Activated T-helper 1 cell treated with anti-CD3 and anti-CD28 coated beads, Interleukin-12 subunit alpha, Interleukin-12 subunit beta, Interleukin-2, Interleukin-4 antibody, amounts not matched to agents 30 ng/mL and 10 ng/mL and 1 ng/mL, durations not matched to agents 14 hours and 24 hours and 36 hours (primary cell): ENCODE measurements at regions of chr2 and their contacts with region 1.

Region 1: DNA sequence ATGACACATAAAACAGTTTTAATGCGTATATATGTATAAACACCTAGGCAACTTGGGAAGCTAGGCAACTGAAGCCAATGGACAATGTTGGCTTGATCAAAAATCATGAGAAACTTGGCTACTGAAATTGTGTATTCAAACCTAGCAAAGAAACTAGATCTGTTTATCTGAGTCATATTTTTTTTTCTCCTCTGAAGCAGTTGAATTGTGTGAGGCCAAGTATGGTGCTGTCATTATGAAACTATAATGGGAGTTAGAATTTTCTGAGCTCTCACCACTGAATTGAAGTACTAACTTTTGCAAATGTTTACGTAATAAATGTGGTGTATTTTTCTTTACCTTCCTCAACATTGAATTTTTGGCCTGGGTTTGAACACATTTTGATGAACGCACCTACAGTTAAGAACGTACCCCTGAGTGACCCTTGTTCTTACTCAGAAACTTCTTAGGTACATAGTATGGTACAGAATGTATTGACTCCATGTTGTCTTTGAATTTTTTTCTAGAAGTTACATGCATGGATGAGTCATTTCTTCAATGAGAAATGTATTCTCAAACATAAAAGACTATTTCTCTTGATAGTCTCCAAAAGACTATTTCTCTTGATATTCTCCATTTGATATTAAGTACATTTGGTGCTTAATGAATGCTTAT is 23.8 kb downstream of the CD28 start:
- DNase-seq: no peak
- H3K4me3 Mint-ChIP-seq: peak overlapping the region; percentile 32
- H3K27ac Mint-ChIP-seq: peak overlapping the region; percentile 97
- H3K4me1 Mint-ChIP-seq: peaks cover 92% of the 10 kb centered on the region
- H3K27me3 Mint-ChIP-seq: no peaks in the 10 kb centered on the region

Region 2: DNA sequence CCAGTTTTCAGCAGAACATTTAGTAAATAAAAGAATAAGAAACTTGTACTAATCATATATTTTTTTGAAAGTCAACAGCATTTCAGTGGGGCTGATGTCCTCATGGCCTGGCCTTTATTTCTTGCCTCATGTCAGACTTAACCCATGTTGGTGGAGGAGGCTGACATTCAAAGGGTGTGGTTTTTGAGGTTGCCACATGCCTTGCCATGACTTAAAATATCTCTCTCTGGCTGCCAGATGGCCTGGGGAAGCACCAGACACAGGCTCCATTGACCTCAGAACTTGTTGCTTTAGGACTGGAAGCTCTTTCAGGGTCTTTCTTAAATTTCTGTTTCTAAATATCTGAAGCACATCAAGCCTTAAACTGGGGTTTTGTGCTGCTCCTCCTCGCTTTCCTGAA is 56.3 kb before region 1 on chr2:
- intact Hi-C with region 1: loop called (anchors 2 kb)
- DNase-seq: peak; percentile 49
- H3K4me3 Mint-ChIP-seq: peak overlapping the region; percentile 61
- H3K27ac Mint-ChIP-seq: peak overlapping the region; percentile 90
- H3K4me1 Mint-ChIP-seq: peaks cover 33% of the 10 kb centered on the region
- H3K27me3 Mint-ChIP-seq: no peaks in the 10 kb centered on the region

Region 3: GRCh38 chr2:203692031-203692710 is 38.0 kb before region 1 on chr2:
- intact Hi-C with region 1: no loop called
- DNase-seq: no peak
- H3K4me3 Mint-ChIP-seq: no peak overlapping the region
- H3K27ac Mint-ChIP-seq: no peak overlapping the region
- H3K4me1 Mint-ChIP-seq: peaks cover 14% of the 10 kb centered on the region
- H3K27me3 Mint-ChIP-seq: peaks cover 8% of the 10 kb centered on the region

Region 4: DNA sequence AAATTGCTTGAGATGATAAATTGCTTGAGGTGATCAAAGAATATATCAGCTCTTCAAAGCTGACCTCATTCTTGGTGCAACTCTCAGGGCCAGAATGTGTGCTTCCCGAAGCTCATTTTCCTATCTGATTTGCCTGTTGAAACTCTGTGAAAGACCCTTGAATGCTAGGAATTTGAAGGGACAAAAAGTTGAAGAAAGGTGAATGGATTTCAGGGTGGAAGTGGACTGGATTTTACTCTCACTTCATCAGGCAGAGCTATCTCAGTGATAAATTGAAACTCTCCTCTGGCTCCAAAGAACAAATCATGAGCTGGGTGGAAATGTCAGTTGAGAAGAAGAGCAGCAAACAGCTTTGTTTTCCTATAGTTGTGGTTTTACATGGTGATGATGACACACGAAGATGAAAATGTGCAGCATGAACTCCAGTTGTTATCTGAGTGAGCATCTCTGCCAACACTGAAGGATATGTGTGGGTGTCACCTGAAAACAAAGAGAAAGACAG is 10.6 kb after region 1 on chr2:
- intact Hi-C with region 1: loop called (anchors 1 kb)
- DNase-seq: peak; percentile 66
- H3K4me3 Mint-ChIP-seq: peak overlapping the region; percentile 67
- H3K27ac Mint-ChIP-seq: peak overlapping the region; percentile 97
- H3K4me1 Mint-ChIP-seq: peaks cover 78% of the 10 kb centered on the region
- H3K27me3 Mint-ChIP-seq: no peaks in the 10 kb centered on the region

Region 5: DNA sequence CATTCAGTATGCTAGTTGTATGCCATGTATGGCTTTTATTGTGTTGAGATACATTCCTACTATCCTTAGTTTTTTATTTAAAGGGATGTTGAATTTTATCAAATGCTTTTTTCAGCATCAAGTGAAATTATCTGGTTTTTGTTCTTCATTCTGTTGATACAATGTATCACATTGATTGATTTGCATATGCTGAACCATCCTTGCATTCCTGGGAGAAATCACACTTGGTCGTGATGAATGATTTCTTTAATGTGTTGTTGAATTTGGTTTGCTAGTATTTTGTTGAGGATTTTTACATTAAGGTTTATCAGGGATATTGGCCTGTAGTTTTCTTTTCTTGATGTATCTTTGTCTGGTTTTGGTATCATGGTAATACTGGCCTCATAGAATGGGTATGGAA is 26.0 kb after region 1 on chr2:
- intact Hi-C with region 1: no loop called
- DNase-seq: no peak
- H3K4me3 Mint-ChIP-seq: no peak overlapping the region
- H3K27ac Mint-ChIP-seq: no peak overlapping the region
- H3K4me1 Mint-ChIP-seq: peaks cover 28% of the 10 kb centered on the region
- H3K27me3 Mint-ChIP-seq: no peaks in the 10 kb centered on the region

Region 6: DNA sequence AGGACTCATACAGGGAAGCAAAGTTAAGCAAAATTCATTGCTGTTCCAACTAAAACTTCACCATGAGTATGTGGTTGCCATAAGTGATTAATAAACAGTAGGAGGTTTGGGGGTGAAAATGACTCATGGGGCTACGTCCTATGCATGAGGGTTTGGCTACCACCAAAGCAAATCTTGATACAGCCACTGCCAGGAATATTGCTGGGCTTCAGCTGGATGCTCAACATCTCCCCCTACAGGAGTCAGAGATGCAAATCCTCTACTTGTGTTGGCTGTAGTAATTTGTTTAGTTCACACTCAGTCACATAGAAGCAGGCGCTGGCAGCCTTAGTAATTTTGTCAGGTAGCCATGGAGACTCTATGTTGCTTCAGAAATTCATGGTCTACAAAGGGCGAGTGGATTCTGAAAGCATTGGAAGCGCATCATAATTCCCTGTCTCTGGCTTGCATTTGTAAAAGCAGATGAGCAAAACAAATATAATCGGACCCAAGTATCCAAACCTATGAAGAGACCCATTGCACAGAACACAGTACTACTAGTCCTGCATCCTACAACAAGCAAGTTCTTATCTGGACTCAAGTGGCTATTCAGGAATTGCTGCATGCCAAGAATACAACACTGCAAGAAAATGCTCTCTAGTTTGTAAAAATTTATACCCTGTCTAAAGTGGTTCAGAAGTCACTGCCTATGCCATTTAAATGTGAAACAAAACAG is 52.2 kb after region 1 on chr2:
- intact Hi-C with region 1: loop called (anchors 1 kb)
- DNase-seq: peak; percentile 50
- H3K4me3 Mint-ChIP-seq: no peak overlapping the region
- H3K27ac Mint-ChIP-seq: peak overlapping the region; percentile 92
- H3K4me1 Mint-ChIP-seq: peaks cover 63% of the 10 kb centered on the region
- H3K27me3 Mint-ChIP-seq: no peaks in the 10 kb centered on the region

Region 7: DNA sequence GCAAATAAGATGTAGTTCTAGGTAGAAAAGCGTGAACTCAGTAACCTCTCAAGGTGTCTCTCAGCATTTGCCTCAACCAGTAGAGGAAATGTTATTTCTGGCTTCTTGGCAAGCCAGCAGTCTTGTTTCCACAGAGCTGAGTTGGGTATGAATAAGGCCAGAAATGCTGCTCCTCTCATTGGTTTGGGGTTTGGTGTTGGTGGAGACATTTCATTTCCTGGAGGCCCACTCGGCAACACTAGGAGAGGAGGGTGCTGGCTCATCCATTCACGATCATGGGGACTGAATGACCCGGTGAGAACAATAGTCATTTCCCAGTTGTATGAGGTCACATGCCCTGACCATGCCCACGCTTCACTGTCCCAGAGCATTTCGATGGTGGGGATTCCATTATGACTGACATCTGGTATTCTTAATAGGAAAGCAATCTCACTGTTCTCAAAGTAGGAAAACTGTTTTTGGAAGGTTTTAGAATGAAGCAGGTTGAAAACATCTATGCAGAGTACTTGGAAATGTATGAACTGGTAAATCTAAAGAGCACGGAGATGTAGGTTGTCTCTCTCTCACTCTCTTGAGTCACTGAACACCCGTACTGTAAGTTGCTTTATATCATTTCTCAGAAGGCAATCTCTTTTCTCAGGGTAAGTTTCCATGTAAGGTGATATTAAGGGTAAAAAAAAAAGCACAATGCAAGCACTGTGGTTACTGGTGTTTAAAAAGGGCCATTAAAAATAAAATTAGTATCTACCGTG is 100.3 kb after region 1 on chr2:
- intact Hi-C with region 1: loop called (anchors 1 kb)
- DNase-seq: peak; percentile 32
- H3K4me3 Mint-ChIP-seq: peak overlapping the region; percentile 27
- H3K27ac Mint-ChIP-seq: peak overlapping the region; percentile 87
- H3K4me1 Mint-ChIP-seq: peaks cover 31% of the 10 kb centered on the region
- H3K27me3 Mint-ChIP-seq: no peaks in the 10 kb centered on the region

Region 8: GRCh38 chr2:203934041-203934492 is 203.9 kb after region 1 on chr2:
- intact Hi-C with region 1: loop called (anchors 5 kb)
- DNase-seq: peak; percentile 39
- H3K4me3 Mint-ChIP-seq: peak overlapping the region; percentile 73
- H3K27ac Mint-ChIP-seq: peak overlapping the region; percentile 93
- H3K4me1 Mint-ChIP-seq: peaks cover 59% of the 10 kb centered on the region
- H3K27me3 Mint-ChIP-seq: no peaks in the 10 kb centered on the region